ENCODE measurements at regions of chr15 and their contacts with region 1.

Region 1: GRCh38 chr15:40217159-40217824 is 21.6 kb upstream of the PAK6 start:
- DNase-seq: peak; percentile 80 to 93 (median 87)
- H3K4me3 ChIP-seq: no peak overlapping the region
- H3K27ac ChIP-seq: no peak overlapping the region
- H3K4me1 ChIP-seq: no peaks in the 10 kb centered on the region
- H3K27me3 ChIP-seq: no peaks in the 10 kb centered on the region

Region 2: GRCh38 chr15:40038638-40039543 is 178.4 kb before region 1 on chr15 and contains the start of gene SRP14:
- CTCF ChIA-PET with region 1: interaction called, 10 read pairs
- POLR2A ChIA-PET with region 1: interaction called, 3 read pairs
- DNase-seq: peak; percentile 95 to 97 (median 96)
- H3K4me3 ChIP-seq: peak within 1 kb of the TSS; percentile 59 to 97 (median 94)
- H3K27ac ChIP-seq: peak within 1 kb of the TSS; percentile 92 to 96
- H3K4me1 ChIP-seq: peaks cover 7 to 24% (median 17%) of the 10 kb centered on the region in 4 experiments
- H3K27me3 ChIP-seq: no peaks in the 10 kb centered on the region

Region 3: DNA sequence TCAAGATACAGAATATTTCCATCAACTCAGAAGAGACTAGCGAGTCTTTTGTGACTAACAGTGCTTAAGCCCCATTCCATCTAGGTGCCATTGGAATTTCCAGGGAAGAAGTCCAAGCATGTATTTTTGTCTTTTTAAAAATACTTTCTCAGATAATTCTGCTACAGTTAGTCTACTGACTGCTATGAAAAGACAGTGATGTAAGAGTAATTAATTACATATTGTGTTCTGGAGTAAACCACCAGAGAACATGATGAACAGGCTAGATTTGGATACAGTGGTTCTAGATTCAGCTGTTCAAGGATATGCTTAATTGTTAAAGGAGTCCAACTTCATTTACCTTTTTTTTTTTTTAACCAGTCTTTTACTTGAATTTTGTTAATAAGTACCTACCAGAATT is 13.2 kb before region 1 on chr15:
- CTCF ChIA-PET with region 1: interaction called, 13 read pairs
- POLR2A ChIA-PET with region 1: interaction called, 3 read pairs
- DNase-seq: no peak
- H3K4me3 ChIP-seq: no peak overlapping the region
- H3K27ac ChIP-seq: no peak overlapping the region
- H3K4me1 ChIP-seq: no peaks in the 10 kb centered on the region
- H3K27me3 ChIP-seq: no peaks in the 10 kb centered on the region

Region 4: DNA sequence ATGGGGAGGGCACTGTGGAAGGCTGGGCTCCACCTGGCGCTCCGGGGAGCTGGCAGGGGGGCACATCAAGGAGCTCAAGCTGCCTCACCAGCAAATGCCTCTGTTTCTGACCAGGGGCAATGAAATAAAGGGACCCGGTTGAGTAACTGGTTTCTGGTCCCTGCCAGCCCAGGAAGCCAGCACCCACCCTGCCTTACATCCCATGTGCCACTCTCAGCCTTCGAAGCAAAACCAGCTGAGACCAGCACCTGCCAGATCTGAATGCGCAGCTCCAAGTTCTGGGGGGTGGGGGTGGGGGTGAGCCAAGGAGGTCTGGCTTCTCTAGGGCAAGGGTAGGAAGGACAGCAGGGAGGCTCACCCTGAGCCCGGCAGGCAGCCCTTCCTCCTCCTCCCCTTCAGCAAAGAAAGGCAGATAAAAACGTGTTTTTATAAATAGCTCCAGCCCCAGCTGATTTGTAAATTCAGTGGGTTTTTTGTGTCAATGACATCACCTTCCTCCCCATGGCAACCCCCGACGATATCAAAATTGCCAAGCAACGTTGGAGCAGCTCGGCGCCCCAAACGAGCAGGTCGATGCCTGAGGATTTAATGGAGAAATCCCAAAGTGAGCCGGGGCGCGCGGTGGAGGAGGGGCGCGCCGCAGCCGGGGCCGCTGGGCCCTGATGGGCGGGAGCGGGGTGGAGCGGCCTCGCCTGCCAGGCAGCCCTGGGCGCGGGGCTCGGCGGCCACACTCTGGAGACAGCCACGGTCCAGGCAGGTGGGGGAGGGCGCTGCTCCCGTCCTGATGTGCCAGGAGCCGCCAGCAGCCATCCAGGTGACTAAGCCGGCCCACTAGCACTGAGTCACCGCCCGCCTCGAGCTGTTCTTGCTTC is 21.5 kb after region 1 on chr15 and contains the start of gene PAK6:
- CTCF ChIA-PET with region 1: interaction called, 23 read pairs
- POLR2A ChIA-PET with region 1: no interaction called
- DNase-seq: peak; percentile 58 to 82 (median 75)
- H3K4me3 ChIP-seq: peak within 1 kb of the TSS; percentile 13 to 68 (median 31)
- H3K27ac ChIP-seq: no peak within 1 kb of the TSS
- H3K4me1 ChIP-seq: peaks cover 4 to 29% (median 26%) of the 10 kb centered on the region in 4 experiments
- H3K27me3 ChIP-seq: peaks cover 0 to 15% (median 2%) of the 10 kb centered on the region in 5 experiments

Region 5: GRCh38 chr15:40338041-40338657 is 120.9 kb after region 1 on chr15:
- CTCF ChIA-PET with region 1: interaction called, 20 read pairs
- POLR2A ChIA-PET with region 1: no interaction called
- DNase-seq: peak; percentile 86 to 92 (median 92)
- H3K4me3 ChIP-seq: peak overlapping the region in 1 of 7 experiments; percentile 42
- H3K27ac ChIP-seq: no peak overlapping the region
- H3K4me1 ChIP-seq: peaks cover 5 to 71% (median 59%) of the 10 kb centered on the region in 4 experiments
- H3K27me3 ChIP-seq: no peaks in the 10 kb centered on the region